RWPE1 (cell line): ENCODE measurements at regions of chr5 and their contacts with region 1.

Region 1: DNA sequence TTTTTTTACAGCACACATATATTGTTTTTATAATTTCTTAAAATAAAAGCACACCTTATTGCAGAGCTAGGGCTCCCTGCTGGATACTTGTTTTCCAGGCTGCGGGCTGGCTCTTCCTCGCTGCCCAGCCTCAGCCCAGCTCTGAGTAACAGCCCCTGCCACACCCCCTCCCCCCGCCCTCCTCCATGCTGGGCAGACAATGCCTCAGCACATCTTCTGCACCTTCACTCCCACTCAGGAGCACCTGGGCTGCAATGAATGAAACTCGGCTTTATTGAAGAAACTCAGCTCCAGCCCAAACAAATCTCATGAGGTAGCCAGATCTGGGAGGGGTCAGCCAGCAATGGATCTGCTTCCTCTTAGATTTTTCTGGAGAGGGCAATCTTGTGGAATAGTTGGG is 9.5 kb downstream of the IL9 start:
- DNase-seq: no peak
- H3K27ac ChIP-seq: no peak overlapping the region
- CTCF ChIP-seq: no peak

Region 2: DNA sequence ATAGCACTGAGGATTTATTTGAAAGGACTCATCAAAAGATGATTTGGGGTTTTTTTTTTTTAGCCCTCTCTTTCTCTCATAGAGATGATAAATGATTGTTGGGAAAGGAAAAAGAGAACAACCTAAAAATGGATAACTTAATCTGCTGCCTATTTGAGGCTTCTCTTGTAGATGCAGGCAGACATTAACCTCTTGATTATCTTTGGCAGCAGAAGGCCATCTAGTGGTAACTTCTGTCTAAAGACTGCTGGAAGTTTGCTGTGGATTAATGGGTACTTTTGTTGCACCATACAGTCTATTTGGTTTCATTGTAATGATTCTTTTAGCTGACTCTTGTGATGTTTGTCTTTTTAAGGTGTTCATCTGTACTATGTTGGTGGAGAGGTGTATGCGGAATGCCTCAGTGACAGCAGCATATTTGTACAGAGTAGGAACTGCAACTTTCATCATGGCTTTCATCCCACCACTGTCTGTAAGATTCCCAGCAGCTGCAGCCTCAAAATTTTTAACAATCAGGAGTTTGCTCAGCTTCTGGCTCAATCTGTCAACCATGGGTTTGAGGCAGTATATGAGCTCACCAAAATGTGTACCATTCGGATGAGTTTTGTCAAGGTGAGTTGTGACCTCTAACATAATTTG is 288.0 kb after region 1 on chr5:
- CTCF ChIA-PET with region 1: interaction called, 10 read pairs
- POLR2A ChIA-PET with region 1: no interaction called
- DNase-seq: peak; percentile 68
- H3K27ac ChIP-seq: no peak overlapping the region
- CTCF ChIP-seq: peak; percentile 81